Kidney (tissue), 22 donors: ENCODE measurements at regions of chr18 and their contacts with region 1.

Region 1: DNA sequence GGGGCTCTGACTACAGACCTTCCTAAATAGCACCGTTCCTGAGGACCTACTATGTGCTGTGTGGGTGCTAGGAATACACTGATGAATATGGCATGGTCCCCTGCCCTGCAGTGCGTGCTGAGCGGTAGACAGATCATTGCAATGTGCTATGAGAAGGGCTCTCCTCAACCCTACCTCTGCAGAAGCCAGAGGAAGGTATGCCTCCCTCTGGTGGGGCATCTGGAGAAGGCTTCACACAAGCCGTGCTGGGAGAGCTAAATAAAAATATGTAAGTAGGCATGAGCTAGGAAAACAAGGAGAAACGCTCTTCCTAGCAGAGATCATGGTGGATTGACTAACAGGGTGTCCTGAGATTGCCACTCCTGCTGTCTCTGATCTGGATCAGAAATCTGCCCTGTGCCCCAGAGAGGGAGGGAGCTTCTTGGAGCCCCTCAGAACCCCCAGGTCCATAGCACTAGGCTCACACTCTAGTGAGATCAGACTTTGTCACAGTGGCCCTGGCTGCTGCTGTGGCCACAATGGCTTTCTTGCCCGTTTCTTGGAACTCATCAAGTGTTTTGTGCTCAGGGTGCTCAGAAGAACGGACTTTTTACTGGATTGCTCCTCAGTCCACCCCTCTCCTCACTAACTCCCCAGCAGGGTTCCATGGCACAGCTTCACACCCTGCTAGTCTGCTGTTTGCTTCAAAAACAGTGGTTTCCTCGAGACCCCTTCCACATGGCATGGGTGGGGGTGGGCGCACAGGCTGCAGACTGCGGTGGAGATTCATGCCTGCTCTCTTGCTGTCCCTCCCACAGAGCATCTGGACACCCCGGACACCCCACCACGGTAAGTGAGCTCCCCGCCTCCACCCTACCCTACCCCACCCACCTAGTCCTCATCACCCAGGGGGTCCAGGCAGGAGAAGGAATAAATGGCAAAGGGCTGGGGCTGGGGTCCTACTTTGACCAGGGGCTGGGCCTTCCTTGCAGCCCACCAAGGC is 14.2 kb downstream of the SIGLEC15 start:
- DNase-seq: peak in 4 of 5 donors; percentile 48 to 64 (median 50)
- H3K4me3 ChIP-seq: no peak overlapping the region
- H3K27ac ChIP-seq: no peak overlapping the region
- H3K4me1 ChIP-seq: peaks cover 0 to 8% (median 5%) of the 10 kb centered on the region in 3 donors
- H3K27me3 ChIP-seq: peaks cover 16% of the 10 kb centered on the region
- CTCF ChIP-seq: peak; percentile 45

Region 2: GRCh38 chr18:45702866-45703265 is 136.8 kb before region 1 on chr18:
- intact Hi-C with region 1: no loop called
- DNase-seq: no peak
- H3K4me3 ChIP-seq: no peak overlapping the region
- H3K27ac ChIP-seq: no peak overlapping the region
- H3K4me1 ChIP-seq: no peaks in the 10 kb centered on the region
- H3K27me3 ChIP-seq: no peaks in the 10 kb centered on the region
- CTCF ChIP-seq: no peak

Region 3: GRCh38 chr18:45722899-45723298 is 116.8 kb before region 1 on chr18:
- intact Hi-C with region 1: loop called (anchors 10 kb)
- DNase-seq: peak; percentile 64 to 88 (median 79)
- H3K4me3 ChIP-seq: no peak overlapping the region
- H3K27ac ChIP-seq: no peak overlapping the region
- H3K4me1 ChIP-seq: no peaks in the 10 kb centered on the region
- H3K27me3 ChIP-seq: no peaks in the 10 kb centered on the region
- CTCF ChIP-seq: peak; percentile 68

Region 4: GRCh38 chr18:45793306-45793965 is 46.3 kb before region 1 on chr18:
- intact Hi-C with region 1: no loop called
- DNase-seq: no peak
- H3K4me3 ChIP-seq: no peak overlapping the region
- H3K27ac ChIP-seq: no peak overlapping the region
- H3K4me1 ChIP-seq: no peaks in the 10 kb centered on the region
- H3K27me3 ChIP-seq: no peaks in the 10 kb centered on the region
- CTCF ChIP-seq: no peak

Region 5: GRCh38 chr18:46356278-46357033 is 516.8 kb after region 1 on chr18:
- intact Hi-C with region 1: no loop called
- DNase-seq: no peak
- H3K4me3 ChIP-seq: no peak overlapping the region
- H3K27ac ChIP-seq: no peak overlapping the region
- H3K4me1 ChIP-seq: no peaks in the 10 kb centered on the region
- H3K27me3 ChIP-seq: no peaks in the 10 kb centered on the region
- CTCF ChIP-seq: no peak